ENCODE measurements at regions of chr6 and their contacts with region 1.

Region 1: DNA sequence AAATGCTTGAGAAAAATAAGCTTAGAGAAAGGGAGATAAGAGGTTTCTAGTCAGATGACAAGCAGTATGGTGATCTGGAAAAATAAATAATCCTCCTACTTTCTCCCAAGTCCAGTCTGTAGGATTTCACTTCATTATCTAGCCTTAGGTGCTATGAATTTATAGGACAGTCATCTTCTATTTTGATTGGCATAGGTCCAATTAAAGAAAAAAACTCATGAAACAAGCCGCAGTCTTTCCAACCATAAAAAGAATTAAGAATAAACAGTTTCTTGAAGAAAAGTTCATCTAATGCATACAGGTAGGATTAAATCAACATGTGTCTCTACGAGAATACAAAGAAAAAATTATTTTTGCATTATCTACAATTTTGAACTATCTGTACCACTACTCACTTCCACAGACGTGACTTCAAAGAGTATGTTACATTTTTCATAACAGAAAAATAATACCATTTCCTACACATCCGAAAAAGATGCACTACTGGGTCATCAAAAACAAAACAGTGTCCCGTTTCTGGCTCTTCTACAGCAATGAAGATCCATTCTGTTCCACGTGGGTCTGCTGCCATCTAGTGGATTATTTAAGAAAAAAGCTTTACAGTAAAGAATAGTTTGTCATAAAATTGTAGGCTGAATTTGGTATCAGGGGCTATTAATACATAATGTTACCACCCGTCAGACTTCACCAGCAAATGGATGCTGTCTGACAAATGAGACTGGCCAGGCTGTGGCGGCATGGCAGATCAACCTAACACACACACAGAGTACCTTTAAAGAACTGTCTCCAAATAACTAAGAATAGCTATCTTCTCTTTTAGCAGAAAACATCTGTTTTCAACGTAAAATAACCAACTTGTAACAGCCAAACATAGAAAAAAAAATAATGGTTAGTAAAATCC is 28.9 kb downstream of the STX7 start:
- DNase-seq: peak; percentile 36 to 56
- ATAC-seq: peak; percentile 64 to 79; a peak in 4 of 6 replicates
- H3K4me3 ChIP-seq: no peak overlapping the region
- H3K27ac ChIP-seq: no peak overlapping the region
- H3K4me1 ChIP-seq: peaks cover 5% of the 10 kb centered on the region; the same call in 2 of the 3 replicates
- CTCF ChIP-seq: peak; percentile 75
- EP300 ChIP-seq: no peak
- POLR2A ChIP-seq: no peak
- RAD21 ChIP-seq: peak; percentile 83 to 85

Region 2: DNA sequence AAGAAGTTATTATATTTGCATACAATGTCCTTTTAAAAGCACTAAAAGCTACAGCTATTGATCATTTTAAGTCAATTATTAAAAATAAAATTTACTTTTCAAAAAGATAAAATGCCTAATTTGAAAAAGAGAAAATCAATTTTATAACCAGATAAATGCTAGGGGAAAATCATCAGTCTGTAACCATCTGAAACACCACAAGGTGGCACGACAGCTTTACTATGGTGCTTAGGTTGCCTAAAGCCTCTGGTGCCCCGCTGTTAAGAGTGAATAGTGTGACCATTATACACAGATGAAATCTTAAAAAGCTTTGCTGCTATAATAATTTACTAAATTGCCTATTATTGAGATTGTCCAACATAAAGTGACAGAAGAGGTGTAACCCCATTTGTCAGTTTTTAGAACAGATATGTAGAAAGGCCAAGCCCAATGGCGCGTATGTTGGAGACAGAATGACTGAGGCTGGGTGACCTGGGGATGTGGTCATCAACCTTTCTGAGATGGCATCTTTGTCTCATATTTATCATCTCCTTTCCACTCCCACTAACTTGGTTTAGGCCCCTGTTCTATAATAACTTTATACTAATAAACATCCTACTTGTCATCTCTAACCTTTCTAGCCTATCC is 183.6 kb before region 1 on chr6:
- CTCF ChIA-PET with region 1: interaction called, 69 read pairs
- POLR2A ChIA-PET with region 1: no interaction called
- DNase-seq: peak; percentile 16 to 53
- ATAC-seq: peak; percentile 87 to 88; a peak in 5 of 6 replicates
- H3K4me3 ChIP-seq: no peak overlapping the region
- H3K27ac ChIP-seq: no peak overlapping the region
- H3K4me1 ChIP-seq: no peaks in the 10 kb centered on the region
- CTCF ChIP-seq: peak; percentile 75
- EP300 ChIP-seq: no peak
- POLR2A ChIP-seq: no peak
- RAD21 ChIP-seq: peak; percentile 87 to 88

Region 3: DNA sequence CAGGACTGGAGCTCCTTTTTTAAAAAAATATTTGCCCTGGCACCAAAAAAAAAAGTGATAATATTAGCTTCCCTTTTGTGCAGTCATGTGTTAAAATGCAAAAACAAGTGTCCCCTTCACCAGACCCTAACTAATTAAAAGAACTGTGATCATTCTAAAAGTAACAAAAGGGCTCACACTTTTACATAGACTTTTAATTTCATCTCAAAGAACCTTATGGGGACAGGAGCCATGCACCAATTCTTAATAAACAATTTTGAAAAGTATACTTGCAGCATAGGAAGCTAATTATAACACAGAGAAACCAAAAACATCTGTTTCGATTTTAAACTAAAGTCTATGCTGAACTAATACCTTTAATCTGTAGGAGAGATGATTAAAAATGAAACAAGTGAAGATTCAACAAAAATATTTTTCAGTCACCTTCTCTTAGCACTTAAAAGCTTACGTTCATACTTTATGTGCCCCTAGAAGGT is 11.6 kb after region 1 on chr6:
- CTCF ChIA-PET with region 1: interaction called, 13 read pairs
- POLR2A ChIA-PET with region 1: no interaction called
- DNase-seq: no peak
- ATAC-seq: no peak
- H3K4me3 ChIP-seq: no peak overlapping the region
- H3K27ac ChIP-seq: no peak overlapping the region
- H3K4me1 ChIP-seq: no peaks in the 10 kb centered on the region
- CTCF ChIP-seq: no peak
- EP300 ChIP-seq: no peak
- POLR2A ChIP-seq: no peak
- RAD21 ChIP-seq: no peak

Measured in A549 (cell line).